ENCODE measurements at regions of chr6 and their contacts with region 1.

Region 1: DNA sequence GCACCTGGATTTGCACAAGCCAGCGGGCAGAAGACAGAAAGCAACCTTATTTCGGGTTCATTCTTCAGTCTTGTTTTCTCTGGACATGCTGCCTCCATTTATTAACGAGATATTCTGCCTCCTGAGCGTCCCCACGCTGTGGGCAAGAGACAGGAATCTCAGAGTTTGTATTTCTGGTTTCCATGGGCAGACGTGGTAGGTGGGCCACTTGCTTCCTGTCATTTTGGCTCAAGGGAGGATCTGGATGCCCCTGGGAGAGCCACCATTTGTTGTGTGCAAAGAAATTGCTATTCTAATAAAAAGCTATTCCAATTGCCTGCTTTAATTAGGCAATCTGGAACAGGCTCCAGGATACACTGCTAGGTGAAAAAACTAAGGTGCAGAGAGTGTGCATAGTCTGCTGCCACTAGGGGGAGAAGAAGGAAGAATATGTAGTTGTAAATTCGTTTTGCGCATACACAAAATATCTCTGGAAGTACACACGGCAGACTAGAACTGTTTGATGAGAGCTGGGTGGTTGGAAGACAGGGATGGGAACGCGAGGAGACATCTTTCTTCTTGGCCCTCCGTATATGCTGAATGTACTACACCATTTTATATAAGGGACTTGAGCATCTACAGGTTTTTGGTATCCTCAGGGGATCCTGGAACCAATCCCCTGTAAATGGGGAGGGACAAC is 30.1 kb upstream of the SLC16A10 start:
- DNase-seq: no peak
- H3K4me3 ChIP-seq: no peak overlapping the region
- H3K27ac ChIP-seq: no peak overlapping the region
- H3K4me1 ChIP-seq: no peaks in the 10 kb centered on the region
- H3K27me3 ChIP-seq: no peaks in the 10 kb centered on the region
- CTCF ChIP-seq: peak in 10 of 11 experiments; percentile 21 to 65 (median 59)
- POLR2A ChIP-seq: no peak

Region 2: GRCh38 chr6:110799189-110799588 is 258.0 kb before region 1 on chr6:
- intact Hi-C with region 1: no loop called
- DNase-seq: no peak
- H3K4me3 ChIP-seq: no peak overlapping the region
- H3K27ac ChIP-seq: no peak overlapping the region
- H3K4me1 ChIP-seq: peaks cover 0 to 44% (median 9%) of the 10 kb centered on the region in 6 donors
- H3K27me3 ChIP-seq: no peaks in the 10 kb centered on the region
- CTCF ChIP-seq: no peak
- POLR2A ChIP-seq: no peak

Region 3: DNA sequence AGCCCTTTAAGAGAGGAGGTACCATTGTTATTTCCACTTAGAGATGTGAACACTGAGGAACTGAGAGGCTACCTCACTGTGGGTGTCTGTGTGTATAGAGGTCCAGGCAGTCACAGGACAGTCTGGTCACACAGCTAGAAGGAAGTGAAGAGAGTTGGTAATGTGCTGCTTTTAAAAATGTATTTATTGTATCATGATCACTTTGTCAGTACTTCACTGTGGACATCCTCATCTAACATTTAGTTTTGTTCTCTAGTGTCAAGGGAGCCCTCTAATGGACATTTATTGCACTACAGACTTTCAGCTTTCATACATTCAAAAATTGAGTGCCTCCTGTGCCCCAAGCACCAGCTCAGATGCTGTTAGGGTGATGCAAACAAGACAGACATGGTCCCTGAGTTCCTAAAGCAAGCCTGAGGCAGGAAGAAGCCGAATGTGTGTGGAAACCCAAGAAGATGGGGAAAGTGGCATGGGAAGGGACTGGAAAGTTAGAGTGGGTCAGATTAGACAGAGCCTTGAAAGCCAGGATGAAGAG is 153.0 kb after region 1 on chr6:
- intact Hi-C with region 1: loop called (anchors 5 kb)
- DNase-seq: no peak
- H3K4me3 ChIP-seq: no peak overlapping the region
- H3K27ac ChIP-seq: no peak overlapping the region
- H3K4me1 ChIP-seq: no peaks in the 10 kb centered on the region
- H3K27me3 ChIP-seq: no peaks in the 10 kb centered on the region
- CTCF ChIP-seq: peak; percentile 25 to 76 (median 66)
- POLR2A ChIP-seq: no peak